Activated B cell treated with CpG ODN at 0.5 μM for 24 hours (primary cell): ENCODE measurements at regions of chr9 and their contacts with region 1.

Region 1: DNA sequence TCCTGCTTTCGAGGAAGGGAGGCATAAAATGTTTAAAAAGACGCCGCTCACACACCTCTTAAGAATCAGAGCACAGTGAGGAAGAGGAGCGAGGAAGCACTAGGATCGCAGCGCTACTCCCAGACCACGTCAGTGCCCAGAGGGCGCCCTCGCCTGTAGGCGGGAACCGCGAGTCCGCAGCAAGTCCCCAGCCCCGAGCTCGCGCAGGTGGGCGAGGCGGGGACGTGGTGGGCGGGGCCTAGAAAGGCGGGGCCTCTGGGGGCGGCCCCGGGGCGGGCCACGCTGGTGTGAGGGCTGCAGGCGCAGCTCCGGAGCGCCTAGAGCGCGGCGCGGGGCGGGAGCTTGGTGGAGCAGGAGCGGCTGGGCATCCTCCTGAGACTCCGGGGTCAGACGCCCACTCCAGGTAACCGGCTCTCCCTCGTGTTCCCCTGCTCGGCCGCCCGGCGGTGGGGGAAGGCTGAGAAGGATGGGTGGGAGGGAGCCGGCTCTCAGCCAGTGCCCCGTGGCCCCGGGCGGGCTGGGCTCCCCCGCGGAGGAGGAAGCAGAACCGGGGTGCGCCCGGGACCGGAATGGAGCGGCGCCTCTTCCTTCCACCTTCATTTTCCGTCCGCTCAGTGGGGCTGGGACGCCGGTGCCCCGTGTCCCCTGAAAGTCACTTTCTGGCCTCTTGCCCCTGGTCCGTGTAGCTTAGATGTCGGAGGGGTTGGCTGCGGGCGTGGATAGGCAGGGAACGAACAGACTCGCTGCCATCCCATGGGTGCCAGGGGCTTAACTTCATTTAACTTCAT is at the start of gene GCNT1:
- DNase-seq: peak; percentile 99
- ATAC-seq: peak; percentile 95
- H3K4me3 Mint-ChIP-seq: peak within 1 kb of the TSS; percentile 94
- H3K27ac Mint-ChIP-seq: peak within 1 kb of the TSS; percentile 84
- H3K4me1 Mint-ChIP-seq: peaks cover 57% of the 10 kb centered on the region
- H3K27me3 Mint-ChIP-seq: no peaks in the 10 kb centered on the region
- CTCF ChIP-seq: no peak
- total RNA-seq, gene GCNT1: 9.2 and 10.6 TPM in 2 replicates

Region 2: GRCh38 chr9:75088260-75088905 is 1370.7 kb before region 1 on chr9 and contains the start of gene OSTF1:
- CTCF ChIA-PET with region 1: no interaction called
- POLR2A ChIA-PET with region 1: no interaction called
- intact Hi-C with region 1: loop called (anchors 5 kb)
- DNase-seq: peak; percentile 93
- ATAC-seq: peak; percentile 87
- H3K4me3 Mint-ChIP-seq: peak within 1 kb of the TSS; percentile 96
- H3K27ac Mint-ChIP-seq: peak within 1 kb of the TSS; percentile 88
- H3K4me1 Mint-ChIP-seq: peaks cover 51% of the 10 kb centered on the region
- H3K27me3 Mint-ChIP-seq: no peaks in the 10 kb centered on the region
- CTCF ChIP-seq: no peak
- total RNA-seq, gene OSTF1: 59.7 and 60.1 TPM in 2 replicates

Region 3: DNA sequence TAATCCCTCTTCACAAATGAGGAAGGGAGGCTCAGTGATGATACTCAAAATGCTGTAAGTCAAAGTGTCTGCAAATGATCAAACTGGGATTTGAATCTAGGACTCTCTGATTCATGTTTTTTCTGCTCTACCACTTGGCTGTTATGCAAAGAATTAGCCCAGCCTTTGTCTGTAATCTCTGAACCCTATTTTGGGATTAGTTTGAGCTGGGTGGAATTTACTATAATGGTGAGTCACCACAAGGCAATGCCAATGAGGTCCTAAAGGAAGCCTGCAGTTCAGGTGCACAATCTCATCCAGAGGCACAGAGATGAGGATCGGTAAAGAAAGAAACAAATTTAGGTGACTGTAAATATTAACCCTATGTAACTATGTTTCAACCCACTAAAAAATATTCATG is 94.1 kb before region 1 on chr9:
- CTCF ChIA-PET with region 1: no interaction called
- POLR2A ChIA-PET with region 1: no interaction called
- intact Hi-C with region 1: no loop called
- DNase-seq: no peak
- ATAC-seq: no peak
- H3K4me3 Mint-ChIP-seq: no peak overlapping the region
- H3K27ac Mint-ChIP-seq: no peak overlapping the region
- H3K4me1 Mint-ChIP-seq: no peaks in the 10 kb centered on the region
- H3K27me3 Mint-ChIP-seq: peaks cover 3% of the 10 kb centered on the region
- CTCF ChIP-seq: no peak

Region 4: GRCh38 chr9:76475686-76476085 is 16.6 kb after region 1 on chr9:
- CTCF ChIA-PET with region 1: interaction called, 10 read pairs
- POLR2A ChIA-PET with region 1: interaction called, 53 read pairs
- intact Hi-C with region 1: loop called (anchors 1 kb)
- DNase-seq: no peak
- ATAC-seq: no peak
- H3K4me3 Mint-ChIP-seq: no peak overlapping the region
- H3K27ac Mint-ChIP-seq: no peak overlapping the region
- H3K4me1 Mint-ChIP-seq: peaks cover 67% of the 10 kb centered on the region
- H3K27me3 Mint-ChIP-seq: peaks cover 5% of the 10 kb centered on the region
- CTCF ChIP-seq: no peak

Region 5: DNA sequence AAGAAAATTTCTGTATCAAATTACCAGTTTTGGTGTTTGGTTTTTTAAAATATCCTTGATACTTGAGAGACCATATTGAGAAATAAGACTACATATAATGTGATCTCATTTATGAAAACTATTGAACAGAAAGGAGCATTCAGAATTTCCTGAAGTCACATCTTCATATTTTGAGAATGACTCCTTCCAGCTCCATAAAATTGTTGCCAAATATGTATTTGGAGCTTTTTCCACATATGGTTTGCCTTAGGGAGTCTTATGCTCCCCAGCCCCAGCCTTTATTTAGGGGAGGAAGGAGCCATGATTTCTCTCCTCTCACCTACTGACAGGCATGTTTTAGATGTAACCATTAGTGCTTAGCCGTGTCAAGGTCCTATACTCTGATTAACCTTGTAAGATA is 50.9 kb after region 1 on chr9:
- CTCF ChIA-PET with region 1: no interaction called
- POLR2A ChIA-PET with region 1: no interaction called
- intact Hi-C with region 1: no loop called
- DNase-seq: no peak
- ATAC-seq: no peak
- H3K4me3 Mint-ChIP-seq: no peak overlapping the region
- H3K27ac Mint-ChIP-seq: no peak overlapping the region
- H3K4me1 Mint-ChIP-seq: peaks cover 2% of the 10 kb centered on the region
- H3K27me3 Mint-ChIP-seq: no peaks in the 10 kb centered on the region
- CTCF ChIP-seq: no peak

Region 6: DNA sequence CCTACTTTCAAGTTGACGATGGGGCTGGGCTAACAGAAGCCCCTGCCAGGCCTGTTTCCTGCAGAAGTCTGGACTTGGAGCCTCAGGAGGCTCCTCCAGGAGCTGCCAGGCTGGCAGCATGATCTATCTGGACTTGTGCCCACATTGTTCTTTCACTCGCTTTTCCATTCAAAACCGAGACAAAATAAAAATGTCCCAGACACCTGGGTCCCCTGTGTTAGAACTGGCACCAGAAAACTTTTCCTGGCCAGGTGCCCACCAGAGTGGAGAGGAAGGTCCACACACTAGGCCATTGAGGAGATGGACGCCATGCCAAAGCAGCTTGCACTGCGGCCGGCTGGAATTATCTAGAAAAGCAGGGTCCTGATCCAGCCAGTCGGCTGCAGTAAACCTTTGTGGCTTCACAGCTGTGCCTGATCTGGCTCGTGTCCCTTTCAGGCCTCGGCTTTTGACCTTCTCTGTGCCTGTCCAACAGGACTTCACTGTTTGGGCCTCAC is 78.1 kb after region 1 on chr9:
- CTCF ChIA-PET with region 1: no interaction called
- POLR2A ChIA-PET with region 1: interaction called, 10 read pairs
- intact Hi-C with region 1: no loop called
- DNase-seq: no peak
- ATAC-seq: no peak
- H3K4me3 Mint-ChIP-seq: no peak overlapping the region
- H3K27ac Mint-ChIP-seq: no peak overlapping the region
- H3K4me1 Mint-ChIP-seq: peaks cover 4% of the 10 kb centered on the region
- H3K27me3 Mint-ChIP-seq: no peaks in the 10 kb centered on the region
- CTCF ChIP-seq: no peak

Region 7: GRCh38 chr9:76658535-76659231 is 199.6 kb after region 1 on chr9:
- CTCF ChIA-PET with region 1: interaction called, 48 read pairs
- POLR2A ChIA-PET with region 1: interaction called, 3 read pairs
- intact Hi-C with region 1: loop called (anchors 1 kb)
- DNase-seq: no peak
- ATAC-seq: peak; percentile 94
- H3K4me3 Mint-ChIP-seq: no peak overlapping the region
- H3K27ac Mint-ChIP-seq: no peak overlapping the region
- H3K4me1 Mint-ChIP-seq: peaks cover 41% of the 10 kb centered on the region
- H3K27me3 Mint-ChIP-seq: peaks cover 3% of the 10 kb centered on the region
- CTCF ChIP-seq: peak; percentile 19

Region 8: DNA sequence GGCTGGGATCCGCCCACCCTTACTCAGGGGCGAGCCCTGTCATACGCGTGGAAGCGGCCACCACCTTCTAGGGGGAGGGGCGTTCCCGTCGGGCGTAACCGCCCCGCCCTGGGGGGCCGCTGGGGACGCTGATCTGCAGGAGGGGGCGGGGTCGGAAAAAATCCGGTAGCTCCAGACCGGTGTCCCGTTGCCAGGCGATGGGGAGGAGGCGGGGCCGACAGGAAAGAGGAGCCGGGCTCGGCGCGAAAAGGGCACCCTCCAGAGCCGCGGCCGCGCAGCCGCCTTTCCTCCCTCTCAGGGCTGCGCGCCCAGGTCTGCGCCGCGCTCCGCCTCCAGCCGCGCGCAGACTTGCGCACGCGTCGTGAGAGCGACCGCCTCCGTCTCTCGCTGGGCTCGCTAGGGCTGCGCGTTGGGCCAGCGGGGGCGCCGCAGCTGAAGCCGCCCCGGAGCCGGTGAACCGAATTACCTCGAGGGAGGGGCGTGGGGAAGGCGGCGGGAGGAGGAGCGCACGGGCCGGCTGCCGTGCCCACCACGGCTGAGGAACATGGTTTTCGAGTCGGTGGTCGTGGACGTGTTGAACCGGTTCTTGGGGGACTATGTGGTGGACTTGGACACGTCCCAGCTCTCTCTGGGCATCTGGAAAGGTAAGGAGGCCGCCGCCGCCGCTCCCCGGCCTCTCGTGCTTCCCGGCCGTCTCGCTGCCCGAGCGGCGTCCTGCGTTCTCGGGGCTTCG is 718.2 kb after region 1 on chr9 and contains the start of gene VPS13A:
- CTCF ChIA-PET with region 1: no interaction called
- POLR2A ChIA-PET with region 1: no interaction called
- intact Hi-C with region 1: loop called (anchors 1 kb)
- DNase-seq: peak; percentile 92
- ATAC-seq: peak; percentile 82
- H3K4me3 Mint-ChIP-seq: peak within 1 kb of the TSS; percentile 92
- H3K27ac Mint-ChIP-seq: peak within 1 kb of the TSS; percentile 83
- H3K4me1 Mint-ChIP-seq: peaks cover 29% of the 10 kb centered on the region
- H3K27me3 Mint-ChIP-seq: no peaks in the 10 kb centered on the region
- CTCF ChIP-seq: no peak
- total RNA-seq, gene VPS13A: 58.0 and 69.8 TPM in 2 replicates